IMR-90 (cell line): ENCODE measurements at regions of chr6 and their contacts with region 1.

Region 1: DNA sequence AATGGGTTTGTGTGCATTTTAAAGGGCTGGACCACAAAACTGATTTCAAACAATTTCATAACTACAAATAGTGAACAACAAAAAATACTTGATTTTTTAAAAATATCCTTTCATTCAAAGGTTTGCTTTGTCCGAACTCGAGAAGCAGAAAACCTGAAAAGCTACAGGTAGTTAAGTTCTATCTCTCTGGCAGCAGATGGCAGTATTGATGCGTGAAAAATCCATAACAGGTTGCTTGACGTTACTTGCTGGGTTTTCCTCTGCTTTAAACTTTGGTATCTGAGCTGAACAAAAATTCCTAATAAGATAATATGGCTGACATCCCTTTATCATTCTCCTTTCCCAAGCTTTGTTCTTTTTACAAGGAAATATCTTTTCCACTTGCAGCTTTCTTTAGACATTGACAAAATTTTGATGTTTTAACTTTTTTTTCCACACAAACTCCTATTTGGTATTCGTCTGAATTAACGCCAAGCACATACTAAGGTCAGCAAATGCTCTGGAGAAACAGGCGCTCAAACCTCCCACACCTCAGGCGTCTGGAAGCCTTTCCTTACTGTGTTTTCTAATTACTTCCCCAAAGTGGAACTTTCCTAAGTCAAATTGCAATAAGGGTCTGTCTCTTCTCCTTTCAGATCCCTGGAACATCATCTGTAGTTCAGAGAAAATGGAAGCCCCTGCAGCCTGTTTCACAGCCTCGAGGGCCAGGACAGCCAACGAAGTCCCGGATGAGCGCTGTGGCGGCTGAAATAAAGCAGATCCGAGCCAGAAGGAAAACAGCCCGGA is 50.3 kb upstream of the GFRAL start:
- DNase-seq: peak; percentile 72
- ATAC-seq: peak; percentile 74
- H3K4me3 ChIP-seq: no peak overlapping the region
- H3K27ac ChIP-seq: no peak overlapping the region
- H3K4me1 ChIP-seq: no peaks in the 10 kb centered on the region
- H3K27me3 ChIP-seq: no peaks in the 10 kb centered on the region
- CTCF ChIP-seq: peak; percentile 71
- POLR2A ChIP-seq: no peak
- RAD21 ChIP-seq: peak; percentile 69

Region 2: DNA sequence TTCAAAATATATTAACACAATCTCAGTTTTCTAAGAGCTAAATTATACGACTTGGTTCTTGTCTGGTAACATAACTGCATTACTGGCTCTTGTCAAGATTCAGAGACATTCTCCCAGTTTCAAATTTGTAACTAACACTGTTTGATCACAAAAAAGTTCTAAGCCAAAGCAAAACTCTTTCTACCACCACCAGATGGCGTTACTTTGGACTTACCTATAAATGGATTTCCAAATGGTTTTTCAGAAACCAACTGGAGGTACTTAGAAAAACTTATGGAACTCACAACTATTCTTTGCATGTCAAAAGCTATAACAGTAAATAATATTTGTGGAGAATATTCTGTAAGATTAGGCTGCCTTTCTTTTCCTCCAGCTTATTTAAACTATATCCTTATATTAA is 16.2 kb after region 1 on chr6:
- CTCF ChIA-PET with region 1: interaction called, 10 read pairs
- POLR2A ChIA-PET with region 1: no interaction called
- dilution Hi-C with region 1: no loop called
- in situ Hi-C with region 1: no loop called
- intact Hi-C with region 1: no loop called
- DNase-seq: peak; percentile 31
- ATAC-seq: no peak
- H3K4me3 ChIP-seq: no peak overlapping the region
- H3K27ac ChIP-seq: no peak overlapping the region
- H3K4me1 ChIP-seq: no peaks in the 10 kb centered on the region
- H3K27me3 ChIP-seq: no peaks in the 10 kb centered on the region
- CTCF ChIP-seq: peak; percentile 34
- POLR2A ChIP-seq: no peak
- RAD21 ChIP-seq: no peak

Region 3: DNA sequence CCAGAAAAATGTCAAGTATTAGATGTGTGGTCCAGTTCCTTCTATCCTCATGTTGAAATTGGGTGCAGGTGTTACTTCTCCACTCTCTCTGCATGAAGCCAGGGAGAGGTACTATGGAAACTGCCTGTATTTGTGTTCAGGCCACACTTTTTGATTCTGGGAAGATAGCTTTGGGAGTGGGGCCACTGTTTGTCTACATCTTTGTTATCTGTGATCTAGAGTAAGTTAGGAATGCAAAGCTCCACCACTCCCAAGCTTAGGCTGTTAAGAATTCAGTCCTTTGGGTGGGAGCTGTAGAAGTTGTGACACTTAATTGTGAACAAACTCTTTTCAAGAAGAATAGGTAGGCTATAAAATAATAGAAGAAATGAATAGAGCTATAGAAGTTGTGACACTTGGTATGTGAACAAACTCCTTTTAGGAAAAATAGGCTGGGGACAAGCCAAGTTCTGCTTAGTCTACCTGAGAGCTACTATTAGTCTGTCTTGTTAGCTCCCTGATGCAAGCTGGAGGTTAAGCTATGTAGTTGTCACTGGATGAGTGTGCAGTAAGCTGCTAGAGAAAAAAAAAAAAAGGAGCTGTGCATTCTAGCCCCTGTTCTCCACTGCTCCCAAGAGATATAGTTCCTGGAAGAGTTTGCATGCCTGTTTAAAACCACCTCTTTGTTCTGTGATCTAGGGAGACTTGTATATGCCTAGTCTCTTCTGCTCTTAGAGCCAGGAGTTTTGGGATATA is 43.2 kb after region 1 on chr6:
- CTCF ChIA-PET with region 1: no interaction called
- POLR2A ChIA-PET with region 1: no interaction called
- dilution Hi-C with region 1: no loop called
- in situ Hi-C with region 1: no loop called
- intact Hi-C with region 1: no loop called
- DNase-seq: no peak
- ATAC-seq: no peak
- H3K4me3 ChIP-seq: no peak overlapping the region
- H3K27ac ChIP-seq: no peak overlapping the region
- H3K4me1 ChIP-seq: no peaks in the 10 kb centered on the region
- H3K27me3 ChIP-seq: no peaks in the 10 kb centered on the region
- CTCF ChIP-seq: no peak
- POLR2A ChIP-seq: no peak
- RAD21 ChIP-seq: no peak

Region 4: GRCh38 chr6:55445648-55446204 is 168.8 kb after region 1 on chr6:
- CTCF ChIA-PET with region 1: interaction called, 4 read pairs
- POLR2A ChIA-PET with region 1: no interaction called
- dilution Hi-C with region 1: no loop called
- in situ Hi-C with region 1: no loop called
- intact Hi-C with region 1: loop called (anchors 2 kb)
- DNase-seq: peak; percentile 45
- ATAC-seq: peak; percentile 48; the same call in 1 of the 2 replicates
- H3K4me3 ChIP-seq: no peak overlapping the region
- H3K27ac ChIP-seq: no peak overlapping the region
- H3K4me1 ChIP-seq: peaks cover 1% of the 10 kb centered on the region
- H3K27me3 ChIP-seq: no peaks in the 10 kb centered on the region
- CTCF ChIP-seq: peak; percentile 66
- POLR2A ChIP-seq: no peak
- RAD21 ChIP-seq: peak; percentile 74

Region 5: DNA sequence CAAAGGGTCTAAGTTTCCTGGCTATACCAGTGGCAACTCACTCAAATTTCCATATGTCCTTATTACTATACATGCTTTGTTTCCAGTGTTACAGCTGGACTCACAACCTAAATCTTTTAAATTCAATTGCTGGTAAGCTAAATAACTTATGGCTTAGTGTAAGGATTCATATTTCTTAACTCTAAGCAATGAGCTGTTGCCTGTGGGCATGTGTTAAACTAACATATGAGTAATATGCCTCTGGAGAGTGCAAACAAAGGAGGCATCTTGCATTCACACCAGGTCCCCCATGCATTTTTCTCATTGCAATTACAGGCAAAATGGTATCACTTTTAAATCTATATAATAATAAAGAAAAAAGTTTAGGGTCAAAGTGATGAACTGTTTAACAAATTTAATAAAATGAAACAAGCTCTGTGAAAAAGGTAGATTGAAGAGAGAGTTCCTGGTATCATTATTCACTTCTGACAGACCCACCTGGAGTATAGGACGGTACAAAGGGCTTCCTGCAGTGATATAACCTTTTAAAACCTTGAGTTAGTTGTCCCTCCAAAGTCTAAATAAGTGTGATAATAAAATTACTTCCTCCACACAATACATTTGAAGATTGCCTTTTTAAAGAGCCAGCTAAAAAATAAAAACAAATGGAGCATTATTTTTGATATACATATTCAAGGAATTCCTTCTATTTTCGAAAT is 359.6 kb after region 1 on chr6:
- CTCF ChIA-PET with region 1: no interaction called
- POLR2A ChIA-PET with region 1: no interaction called
- dilution Hi-C with region 1: no loop called
- in situ Hi-C with region 1: no loop called
- intact Hi-C with region 1: loop called (anchors 10 kb)
- DNase-seq: peak; percentile 76
- ATAC-seq: peak; percentile 91
- H3K4me3 ChIP-seq: no peak overlapping the region
- H3K27ac ChIP-seq: peak overlapping the region; percentile 25; the same call in 1 of the 2 replicates
- H3K4me1 ChIP-seq: peaks cover 3% of the 10 kb centered on the region; the same call in 1 of the 2 replicates
- H3K27me3 ChIP-seq: no peaks in the 10 kb centered on the region
- CTCF ChIP-seq: no peak
- POLR2A ChIP-seq: no peak
- RAD21 ChIP-seq: no peak

Region 6: GRCh38 chr6:55886185-55886836 is 609.4 kb after region 1 on chr6:
- CTCF ChIA-PET with region 1: interaction called, 3 read pairs
- POLR2A ChIA-PET with region 1: no interaction called
- dilution Hi-C with region 1: no loop called
- in situ Hi-C with region 1: no loop called
- intact Hi-C with region 1: loop called (anchors 2 kb)
- DNase-seq: peak; percentile 24
- ATAC-seq: no peak; the same call in 1 of the 2 replicates
- H3K4me3 ChIP-seq: no peak overlapping the region
- H3K27ac ChIP-seq: peak overlapping the region; percentile 78; the same call in 1 of the 2 replicates
- H3K4me1 ChIP-seq: 0 out of 2 replicates have a peak, but pooled peaks cover 2% of the 10 kb centered on the region
- H3K27me3 ChIP-seq: no peaks in the 10 kb centered on the region
- CTCF ChIP-seq: peak; percentile 57
- POLR2A ChIP-seq: no peak
- RAD21 ChIP-seq: peak; percentile 60

Region 7: DNA sequence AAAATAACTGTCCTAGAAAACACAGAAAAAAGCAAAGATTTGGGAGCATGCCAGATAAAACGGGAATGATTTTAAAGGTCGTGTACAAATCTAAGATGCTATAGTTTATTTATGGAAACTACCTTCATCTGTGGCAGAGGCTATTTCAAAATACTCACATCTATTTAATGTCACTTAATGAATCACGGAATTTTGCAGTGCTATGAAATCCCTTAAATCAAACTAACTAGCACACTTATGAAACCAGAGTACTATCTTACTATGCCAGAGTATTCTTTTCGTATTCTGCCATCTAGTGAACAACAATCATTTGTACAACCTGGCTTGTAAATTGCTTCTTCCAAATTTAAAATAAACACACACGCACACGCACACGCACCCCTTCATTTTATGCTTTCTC is 676.4 kb after region 1 on chr6:
- CTCF ChIA-PET with region 1: interaction called, 8 read pairs
- POLR2A ChIA-PET with region 1: no interaction called
- dilution Hi-C with region 1: no loop called
- in situ Hi-C with region 1: loop called (anchors 5 kb)
- intact Hi-C with region 1: loop called (anchors 1 kb)
- DNase-seq: peak; percentile 74
- ATAC-seq: peak; percentile 93
- H3K4me3 ChIP-seq: no peak overlapping the region
- H3K27ac ChIP-seq: no peak overlapping the region
- H3K4me1 ChIP-seq: no peaks in the 10 kb centered on the region; the same call in 1 of the 2 replicates
- H3K27me3 ChIP-seq: no peaks in the 10 kb centered on the region
- CTCF ChIP-seq: peak; percentile 66
- POLR2A ChIP-seq: no peak
- RAD21 ChIP-seq: peak; percentile 80

Region 8: DNA sequence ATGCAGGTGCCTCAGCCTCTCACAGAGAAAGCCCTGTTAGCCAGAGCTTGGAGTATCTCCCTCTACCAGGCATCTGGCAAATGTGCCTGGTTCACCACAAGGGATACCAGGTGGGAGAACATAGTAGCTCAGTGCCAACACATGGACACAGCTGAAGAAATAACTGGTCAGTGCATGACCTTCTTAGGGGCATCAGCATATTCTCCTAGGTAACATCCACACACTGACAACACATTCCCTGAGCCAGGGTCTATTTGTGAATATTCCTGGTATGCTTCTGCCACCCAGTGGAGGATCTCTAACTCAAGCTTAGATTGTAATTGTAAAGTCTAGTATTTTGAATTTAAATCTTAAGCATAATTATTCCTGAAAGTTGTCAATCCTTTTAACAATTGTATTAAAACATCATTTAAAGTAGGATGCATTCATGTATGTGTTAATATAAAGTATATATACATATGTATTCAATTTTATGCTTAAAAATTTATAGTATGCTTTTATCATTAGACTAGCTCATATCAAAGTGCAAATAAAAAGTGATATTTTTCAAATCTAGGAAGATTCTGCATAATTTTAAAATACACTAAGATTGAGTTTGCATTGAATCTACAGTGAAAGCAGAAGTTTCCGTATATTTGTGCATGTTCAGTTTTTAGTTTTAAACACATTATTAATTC is 1015.7 kb after region 1 on chr6:
- CTCF ChIA-PET with region 1: interaction called, 5 read pairs
- POLR2A ChIA-PET with region 1: no interaction called
- dilution Hi-C with region 1: no loop called
- in situ Hi-C with region 1: loop called (anchors 25 kb)
- intact Hi-C with region 1: loop called (anchors 2 kb)
- DNase-seq: peak; percentile 62
- ATAC-seq: peak; percentile 92
- H3K4me3 ChIP-seq: no peak overlapping the region
- H3K27ac ChIP-seq: no peak overlapping the region
- H3K4me1 ChIP-seq: no peaks in the 10 kb centered on the region
- H3K27me3 ChIP-seq: no peaks in the 10 kb centered on the region; the same call in 1 of the 2 replicates
- CTCF ChIP-seq: peak; percentile 79
- POLR2A ChIP-seq: no peak
- RAD21 ChIP-seq: peak; percentile 90